ENCODE measurements at regions of chr1 and their contacts with region 1.

Region 1: GRCh38 chr1:246907472-246907871 is 24.3 kb downstream of the AHCTF1 start:
- DNase-seq: no peak
- ATAC-seq: no peak
- H3K4me3 Mint-ChIP-seq: no peak overlapping the region
- H3K27ac Mint-ChIP-seq: no peak overlapping the region
- H3K4me1 Mint-ChIP-seq: no peaks in the 10 kb centered on the region
- H3K27me3 Mint-ChIP-seq: no peaks in the 10 kb centered on the region

Region 2: GRCh38 chr1:246923482-246923881 is 16.0 kb after region 1 on chr1:
- CTCF ChIA-PET with region 1: interaction called, 10 read pairs
- POLR2A ChIA-PET with region 1: interaction called, 3 read pairs
- intact Hi-C with region 1: no loop called
- DNase-seq: no peak
- ATAC-seq: no peak
- H3K4me3 Mint-ChIP-seq: peak overlapping the region; percentile 9
- H3K27ac Mint-ChIP-seq: peak overlapping the region; percentile 55
- H3K4me1 Mint-ChIP-seq: peaks cover 43% of the 10 kb centered on the region
- H3K27me3 Mint-ChIP-seq: no peaks in the 10 kb centered on the region

Region 3: GRCh38 chr1:246971090-246971721 is 63.7 kb after region 1 on chr1:
- CTCF ChIA-PET with region 1: interaction called, 3 read pairs
- POLR2A ChIA-PET with region 1: no interaction called
- intact Hi-C with region 1: loop called (anchors 1 to 2 kb)
- DNase-seq: peak; percentile 71
- ATAC-seq: no peak
- H3K4me3 Mint-ChIP-seq: no peak overlapping the region
- H3K27ac Mint-ChIP-seq: no peak overlapping the region
- H3K4me1 Mint-ChIP-seq: no peaks in the 10 kb centered on the region
- H3K27me3 Mint-ChIP-seq: no peaks in the 10 kb centered on the region

Region 4: DNA sequence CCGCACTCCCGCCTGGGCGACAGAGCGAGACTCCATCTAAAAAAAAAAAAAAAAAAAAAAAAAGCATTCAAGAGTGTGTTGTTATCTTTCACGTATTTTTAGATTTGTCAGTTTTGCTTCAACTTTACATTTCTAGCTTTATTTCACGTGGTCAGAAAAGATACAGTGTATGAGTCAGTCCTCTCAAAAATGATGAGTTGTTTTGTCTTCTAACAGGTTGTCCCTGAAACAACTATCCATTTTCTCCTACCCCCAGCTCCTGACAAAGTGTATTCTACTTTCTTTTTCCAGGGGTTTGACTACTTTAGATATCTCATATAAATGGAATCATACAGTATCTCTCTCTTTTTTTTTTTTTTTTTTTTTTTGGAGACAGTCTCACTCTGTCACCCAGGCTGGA is 105.9 kb after region 1 on chr1:
- CTCF ChIA-PET with region 1: no interaction called
- POLR2A ChIA-PET with region 1: no interaction called
- intact Hi-C with region 1: no loop called
- DNase-seq: no peak
- ATAC-seq: peak; percentile 76
- H3K4me3 Mint-ChIP-seq: no peak overlapping the region
- H3K27ac Mint-ChIP-seq: no peak overlapping the region
- H3K4me1 Mint-ChIP-seq: no peaks in the 10 kb centered on the region
- H3K27me3 Mint-ChIP-seq: peaks cover 7% of the 10 kb centered on the region